ENCODE measurements at regions of chr2 and their contacts with region 1.

Region 1: DNA sequence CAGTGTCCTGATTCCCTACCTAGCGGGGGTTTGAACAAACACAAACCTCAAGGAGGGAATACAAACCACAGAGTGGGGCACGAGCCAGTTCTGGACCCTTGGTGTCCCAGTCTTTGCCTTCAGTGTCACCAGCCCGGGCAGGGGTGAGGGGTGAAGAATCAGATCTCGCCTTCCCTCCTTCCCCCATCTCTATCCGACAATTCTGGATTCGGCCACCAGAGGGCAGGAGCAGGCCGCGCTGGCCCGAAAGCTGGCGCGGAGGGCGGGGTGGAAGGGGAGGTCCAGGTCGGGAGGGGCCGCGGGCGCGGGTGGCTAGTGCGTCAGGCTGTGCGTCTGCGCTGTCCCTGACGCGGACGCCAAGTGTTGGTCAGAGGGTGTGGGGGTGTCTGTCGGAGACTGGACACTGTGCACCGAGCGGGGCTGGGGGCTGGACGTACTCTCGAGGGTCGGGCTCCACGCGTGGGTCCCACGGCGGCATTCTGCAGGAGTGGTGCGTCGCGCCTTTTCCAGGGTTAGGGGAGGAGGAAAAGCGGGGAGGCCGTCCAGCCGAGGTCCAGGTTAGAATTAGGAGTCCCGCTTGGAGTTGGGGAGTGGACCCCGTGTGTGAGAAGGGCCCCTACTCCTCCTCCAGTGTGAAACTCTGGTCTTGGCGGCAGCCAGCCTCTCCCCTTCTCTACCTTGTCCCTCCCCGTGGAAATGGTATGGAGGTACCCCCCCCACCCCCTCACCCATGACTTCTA is 2.9 kb upstream of the CRYBA2 start:
- DNase-seq: no peak
- H3K4me3 ChIP-seq: peak overlapping the region; percentile 50
- CTCF ChIP-seq: peak; percentile 90

Region 2: DNA sequence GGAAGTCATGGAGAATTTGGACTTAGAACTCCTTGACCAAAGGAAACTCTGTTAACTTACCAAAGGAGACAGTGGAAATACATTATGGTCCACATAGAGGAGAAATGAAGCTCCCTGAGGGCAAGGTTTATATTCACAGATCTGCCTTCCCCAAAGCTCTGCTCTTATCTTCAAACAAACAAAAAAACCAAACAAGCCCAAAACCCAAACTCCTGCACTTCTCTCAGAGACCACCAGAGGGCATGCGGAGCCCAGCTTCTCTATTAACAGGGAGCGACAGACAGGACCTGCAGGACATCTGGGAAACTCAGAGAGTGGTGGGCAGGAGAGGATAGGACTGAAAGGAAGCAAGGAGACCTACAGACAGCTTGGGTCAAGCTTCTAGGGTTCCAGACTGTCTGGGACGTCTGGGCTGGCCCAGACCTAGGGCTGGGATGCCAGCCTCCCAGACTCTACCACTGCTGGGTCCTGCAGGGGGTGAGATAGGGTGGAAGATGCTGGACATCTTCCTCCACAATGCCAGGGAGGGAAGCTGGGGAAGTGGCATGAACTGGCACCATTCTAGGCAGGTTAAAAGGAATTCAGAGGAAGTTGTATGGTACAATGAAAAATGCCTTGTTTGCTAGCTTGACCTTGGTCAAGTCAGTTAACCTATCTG is 119.5 kb before region 1 on chr2:
- CTCF ChIA-PET with region 1: interaction called, 11 read pairs
- POLR2A ChIA-PET with region 1: no interaction called
- DNase-seq: no peak
- H3K4me3 ChIP-seq: no peak overlapping the region
- CTCF ChIP-seq: peak; percentile 86

Region 3: GRCh38 chr2:218892693-218893348 is 103.3 kb before region 1 on chr2:
- CTCF ChIA-PET with region 1: no interaction called
- POLR2A ChIA-PET with region 1: no interaction called
- DNase-seq: no peak
- H3K4me3 ChIP-seq: peak overlapping the region; percentile 33
- CTCF ChIP-seq: peak; percentile 48

Region 4: DNA sequence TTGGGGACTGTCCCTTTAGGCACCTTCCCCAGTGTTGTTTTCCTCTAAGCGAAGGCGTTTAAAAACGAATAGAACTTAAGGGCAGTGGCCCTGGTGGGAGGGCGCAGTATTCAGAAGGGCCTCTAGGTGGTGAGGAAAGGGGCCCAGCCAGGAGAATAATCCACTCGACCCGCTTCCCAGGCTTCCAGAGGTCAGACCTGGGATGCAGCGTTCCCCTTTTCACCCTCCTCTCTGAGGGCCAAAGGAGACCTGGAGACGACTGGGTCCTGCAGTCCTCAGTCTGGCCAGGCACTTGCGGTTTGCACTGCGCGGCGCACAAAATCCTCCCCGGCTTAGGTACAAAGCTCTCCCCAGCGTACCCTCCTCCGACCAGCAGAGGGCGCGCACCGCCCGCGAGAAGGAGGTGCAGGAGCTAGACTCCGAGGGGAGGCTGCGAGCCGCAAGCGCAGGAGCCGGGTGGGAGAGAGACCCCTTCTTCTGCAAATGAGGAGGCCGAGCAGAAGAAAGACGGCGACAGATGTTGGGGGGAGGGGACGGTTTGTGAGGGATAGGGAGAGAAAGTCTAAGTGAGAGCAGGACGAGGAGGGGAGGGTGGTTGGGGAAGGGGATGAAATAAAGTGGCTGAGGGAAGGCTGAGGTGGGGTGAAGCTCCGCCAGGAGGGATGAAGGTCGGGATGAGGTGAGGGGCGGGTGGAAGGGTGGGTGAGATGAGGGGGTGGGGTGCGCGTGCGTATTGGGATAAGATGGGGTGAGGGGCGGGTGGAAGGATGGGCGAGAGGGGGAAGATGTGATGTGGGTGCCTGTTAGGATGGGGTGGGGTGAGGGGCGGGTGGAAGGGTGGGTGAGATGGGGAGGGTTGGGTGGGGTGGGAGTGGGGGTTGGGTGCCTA is 16.1 kb before region 1 on chr2:
- CTCF ChIA-PET with region 1: interaction called, 227 read pairs
- POLR2A ChIA-PET with region 1: no interaction called
- DNase-seq: no peak
- H3K4me3 ChIP-seq: peak overlapping the region; percentile 45
- CTCF ChIP-seq: peak; percentile 93

Region 5: GRCh38 chr2:219020604-219021365 is 24.6 kb after region 1 on chr2:
- CTCF ChIA-PET with region 1: interaction called, 12 read pairs
- POLR2A ChIA-PET with region 1: no interaction called
- DNase-seq: no peak
- H3K4me3 ChIP-seq: no peak overlapping the region
- CTCF ChIP-seq: no peak

Region 6: GRCh38 chr2:219142329-219142728 is 146.2 kb after region 1 on chr2:
- CTCF ChIA-PET with region 1: interaction called, 17 read pairs
- POLR2A ChIA-PET with region 1: interaction called, 3 read pairs
- DNase-seq: peak; percentile 46
- H3K4me3 ChIP-seq: no peak overlapping the region
- CTCF ChIP-seq: peak; percentile 51

Region 7: GRCh38 chr2:219253753-219254590 is 257.8 kb after region 1 on chr2 and contains the start of gene TUBA4A:
- CTCF ChIA-PET with region 1: no interaction called
- POLR2A ChIA-PET with region 1: no interaction called
- DNase-seq: no peak
- H3K4me3 ChIP-seq: peak within 1 kb of the TSS; percentile 57
- CTCF ChIP-seq: no peak

Region 8: DNA sequence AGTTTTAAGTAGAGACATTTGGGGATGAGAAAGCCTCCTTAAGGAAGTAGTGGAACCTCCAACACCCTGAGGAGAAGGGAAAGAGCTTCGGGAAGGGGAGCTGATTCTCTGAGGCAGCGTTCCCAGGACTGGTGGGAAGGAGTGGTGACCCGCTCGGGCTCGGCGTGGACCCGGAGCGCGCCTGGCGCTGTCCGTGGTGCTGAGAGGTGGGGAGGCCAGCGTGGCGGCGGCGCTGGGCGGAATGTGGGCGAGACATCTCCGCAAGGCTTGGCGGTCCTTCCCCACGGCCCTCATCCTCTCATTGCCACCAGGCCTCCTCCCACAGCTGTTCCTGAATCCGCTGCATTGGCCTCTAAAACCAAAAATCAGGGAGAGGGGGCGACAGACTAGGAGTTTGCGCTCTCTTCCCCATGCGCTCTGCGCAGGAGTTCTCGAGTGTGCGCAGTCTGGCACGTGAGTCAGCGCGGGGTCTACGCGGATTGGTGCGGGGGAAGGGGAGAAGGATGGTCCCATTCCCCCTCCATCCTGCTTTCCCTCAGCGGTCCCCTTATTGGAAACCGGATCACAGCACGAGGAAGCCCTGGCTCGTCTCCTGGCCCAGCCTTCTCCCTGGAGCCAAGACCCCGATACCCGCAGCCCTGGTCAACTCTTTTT is 335.5 kb after region 1 on chr2:
- CTCF ChIA-PET with region 1: no interaction called
- POLR2A ChIA-PET with region 1: no interaction called
- DNase-seq: no peak
- H3K4me3 ChIP-seq: no peak overlapping the region
- CTCF ChIP-seq: no peak